ENCODE measurements at regions of chr1 and their contacts with region 1.

Region 1: DNA sequence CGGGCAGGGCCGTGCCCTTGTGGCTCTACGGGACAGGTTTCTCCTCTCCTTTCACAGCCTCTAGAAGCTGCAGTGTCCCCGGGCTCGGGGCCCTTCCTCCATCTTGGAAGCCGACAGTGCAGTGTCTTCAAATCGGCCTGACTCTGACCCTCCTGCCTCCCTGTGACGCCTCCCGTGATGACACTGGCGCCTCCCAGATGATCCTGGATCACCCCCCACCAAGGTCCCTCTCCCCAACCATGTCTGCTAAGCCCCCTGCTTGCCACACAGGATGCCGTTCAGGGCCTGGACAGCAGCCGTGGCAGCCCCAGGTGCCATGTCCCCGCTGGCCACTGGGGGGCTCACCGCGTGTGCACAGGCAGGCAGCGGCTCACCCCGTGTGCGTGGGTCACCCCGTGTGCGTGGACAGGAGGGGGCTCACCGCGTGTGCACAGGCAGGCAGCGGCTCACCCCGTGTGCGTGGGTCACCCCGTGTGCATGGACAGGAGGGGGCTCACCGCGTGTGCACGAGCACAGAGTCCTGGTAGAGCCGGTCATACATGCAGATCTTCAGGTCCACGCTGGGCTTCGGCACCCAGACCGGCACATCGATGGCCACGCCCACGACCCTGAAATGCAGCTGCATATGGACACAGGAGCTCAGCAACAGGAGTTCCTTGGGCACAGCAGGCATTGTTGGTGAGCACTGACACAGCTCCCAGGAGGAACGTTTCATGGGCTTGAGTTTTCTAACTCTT is 24.9 kb upstream of the TMEM52 start:
- DNase-seq: peak in 5 of 6 donors; percentile 49 to 89 (median 77)
- ATAC-seq: peak; percentile 92 to 98 (median 96)
- H3K4me3 ChIP-seq: peak overlapping the region in 2 of 4 donors; percentile 12 to 33
- H3K27ac ChIP-seq: no peak overlapping the region
- H3K4me1 ChIP-seq: peaks cover 0 to 3% (median 0%) of the 10 kb centered on the region in 3 donors
- H3K27me3 ChIP-seq: no peaks in the 10 kb centered on the region
- CTCF ChIP-seq: peak; percentile 76 to 95 (median 92)

Region 2: GRCh38 chr1:2044510-2045319 is 100.7 kb after region 1 on chr1:
- intact Hi-C with region 1: loop called in 2 of 3 experiments (anchors 5 kb)
- DNase-seq: peak; percentile 49 to 95 (median 79)
- ATAC-seq: peak; percentile 71 to 86 (median 81)
- H3K4me3 ChIP-seq: peak overlapping the region in 2 of 4 donors; percentile 25 to 33
- H3K27ac ChIP-seq: no peak overlapping the region
- H3K4me1 ChIP-seq: peaks cover 0 to 8% (median 4%) of the 10 kb centered on the region in 3 donors
- H3K27me3 ChIP-seq: no peaks in the 10 kb centered on the region
- CTCF ChIP-seq: peak; percentile 67 to 87 (median 81)